ENCODE measurements at regions of chr11 and their contacts with region 1.

Region 1: GRCh38 chr11:132126973-132127899 is 756.8 kb downstream of the NTM start:
- DNase-seq: peak; percentile 86
- ATAC-seq: peak; percentile 94

Region 2: DNA sequence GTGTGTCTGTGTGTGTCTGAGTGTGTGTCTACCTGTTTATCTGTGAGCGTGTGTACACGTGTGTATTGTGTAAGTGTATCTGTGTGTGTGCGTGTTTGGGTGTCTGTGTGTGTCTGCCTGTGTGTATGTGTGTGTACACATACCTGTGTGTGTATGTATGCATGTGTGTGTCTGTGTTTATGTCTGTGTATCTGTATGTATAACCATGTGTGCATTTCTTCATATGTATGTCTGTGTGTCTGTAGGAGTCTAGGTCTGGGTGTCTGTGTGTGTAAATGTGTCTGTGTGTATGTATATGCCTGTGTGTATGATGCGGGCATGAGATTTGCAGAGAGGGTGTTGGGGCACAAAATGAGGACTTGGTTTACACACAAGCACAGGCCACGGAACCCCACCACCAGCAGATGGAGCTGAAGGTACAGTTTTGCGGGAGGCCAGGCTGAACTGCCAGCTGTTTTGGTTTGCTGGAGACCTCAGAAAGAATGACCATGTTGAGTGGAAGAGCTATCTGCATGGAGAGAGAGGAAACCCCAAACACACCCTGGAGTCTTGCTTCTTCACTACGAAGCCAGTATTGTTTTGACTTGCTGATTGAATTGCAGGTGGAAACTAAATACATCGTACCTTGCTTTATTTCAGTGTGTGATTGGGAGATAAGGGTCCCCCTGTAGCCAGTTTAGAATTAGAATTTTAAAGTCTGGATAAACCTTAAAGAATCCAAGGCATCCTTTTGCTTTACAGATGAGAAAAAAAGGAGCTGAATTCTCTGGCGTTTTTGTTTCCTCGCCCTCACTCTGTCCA is 259.6 kb before region 1 on chr11:
- intact Hi-C with region 1: loop called (anchors 5 kb)
- DNase-seq: peak; percentile 88
- ATAC-seq: peak; percentile 93